ENCODE measurements at regions of chr22 and their contacts with region 1.

Region 1: DNA sequence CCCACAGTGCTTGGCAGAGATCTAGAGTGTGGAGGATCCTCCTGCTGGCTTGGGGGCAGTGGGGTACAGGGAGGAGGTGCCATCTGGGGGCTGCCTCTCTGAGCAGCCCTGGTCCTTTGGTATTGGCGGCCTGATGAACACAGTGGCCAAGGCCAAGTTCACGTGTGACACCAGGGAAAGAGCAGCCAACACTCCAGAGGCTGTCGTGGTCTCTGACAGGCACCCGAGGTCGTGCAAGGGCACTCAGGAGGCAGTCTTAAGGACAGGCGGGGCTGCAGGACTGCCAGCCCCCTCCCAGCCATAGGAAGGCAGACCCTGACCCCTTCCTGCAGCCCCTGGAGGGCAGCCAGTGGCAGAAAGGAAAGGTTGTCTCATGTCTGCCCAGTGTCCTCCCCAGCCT is 30.7 kb downstream of the PHF21B start:
- DNase-seq: no peak
- H3K4me3 ChIP-seq: no peak overlapping the region
- H3K4me3 Mint-ChIP-seq: no peak overlapping the region
- H3K27ac ChIP-seq: no peak overlapping the region
- H3K27ac Mint-ChIP-seq: no peak overlapping the region
- H3K4me1 ChIP-seq: no peaks in the 10 kb centered on the region
- H3K4me1 Mint-ChIP-seq: no peaks in the 10 kb centered on the region
- H3K27me3 ChIP-seq: no peaks in the 10 kb centered on the region
- H3K27me3 Mint-ChIP-seq: peaks cover 5 to 25% of the 10 kb centered on the region in 2 donors

Region 2: GRCh38 chr22:45087802-45088201 is 108.6 kb after region 1 on chr22:
- CTCF ChIA-PET with region 1: no interaction called
- POLR2A ChIA-PET with region 1: interaction called, 12 read pairs
- DNase-seq: no peak
- H3K4me3 ChIP-seq: no peak overlapping the region
- H3K4me3 Mint-ChIP-seq: no peak overlapping the region
- H3K27ac ChIP-seq: no peak overlapping the region
- H3K27ac Mint-ChIP-seq: no peak overlapping the region
- H3K4me1 ChIP-seq: no peaks in the 10 kb centered on the region
- H3K4me1 Mint-ChIP-seq: no peaks in the 10 kb centered on the region
- H3K27me3 ChIP-seq: no peaks in the 10 kb centered on the region
- H3K27me3 Mint-ChIP-seq: peaks cover 18 to 22% of the 10 kb centered on the region in 2 donors